ENCODE measurements at regions of chr14 and their contacts with region 1.

Region 1: DNA sequence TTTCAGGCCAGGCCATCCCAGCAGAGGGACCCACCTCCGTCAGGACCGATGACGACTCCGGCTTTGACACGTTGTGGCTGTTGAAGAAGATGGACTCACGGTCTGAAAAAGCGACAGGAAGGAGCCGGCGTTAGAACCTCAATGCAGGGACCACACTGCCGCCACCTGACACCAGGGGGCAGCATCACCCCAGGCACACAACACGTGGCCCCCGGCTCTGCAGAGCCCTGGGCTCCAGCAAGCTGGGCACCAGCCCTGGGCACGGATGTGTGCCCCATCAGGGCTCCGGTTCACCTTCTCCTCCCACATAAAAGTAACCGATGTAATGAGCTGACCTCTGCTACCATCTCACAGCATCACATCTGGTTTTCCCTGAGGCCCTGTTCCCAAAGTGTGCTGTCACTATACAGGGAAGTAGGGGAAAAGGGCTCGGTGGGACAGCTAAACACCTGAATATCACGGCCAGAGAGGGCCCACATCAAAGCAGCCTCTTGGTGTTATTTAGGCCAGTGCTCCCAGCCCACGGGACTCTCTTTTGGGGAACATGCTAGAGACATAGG is 29.0 kb downstream of the CHGA start:
- DNase-seq: peak; percentile 88
- H3K4me3 Mint-ChIP-seq: no peak overlapping the region
- H3K27ac Mint-ChIP-seq: no peak overlapping the region
- H3K4me1 Mint-ChIP-seq: peaks cover 4% of the 10 kb centered on the region
- H3K27me3 Mint-ChIP-seq: no peaks in the 10 kb centered on the region

Region 2: GRCh38 chr14:92926180-92926848 is 25.7 kb before region 1 on chr14:
- CTCF ChIA-PET with region 1: no interaction called
- POLR2A ChIA-PET with region 1: no interaction called
- intact Hi-C with region 1: no loop called
- DNase-seq: no peak
- H3K4me3 Mint-ChIP-seq: no peak overlapping the region
- H3K27ac Mint-ChIP-seq: no peak overlapping the region
- H3K4me1 Mint-ChIP-seq: peaks cover 4% of the 10 kb centered on the region
- H3K27me3 Mint-ChIP-seq: peaks cover 16% of the 10 kb centered on the region

Region 3: GRCh38 chr14:92963301-92964123 is 11.5 kb after region 1 on chr14:
- CTCF ChIA-PET with region 1: interaction called, 15 read pairs
- POLR2A ChIA-PET with region 1: no interaction called
- intact Hi-C with region 1: no loop called
- DNase-seq: no peak
- H3K4me3 Mint-ChIP-seq: no peak overlapping the region
- H3K27ac Mint-ChIP-seq: no peak overlapping the region
- H3K4me1 Mint-ChIP-seq: no peaks in the 10 kb centered on the region
- H3K27me3 Mint-ChIP-seq: no peaks in the 10 kb centered on the region

Region 4: DNA sequence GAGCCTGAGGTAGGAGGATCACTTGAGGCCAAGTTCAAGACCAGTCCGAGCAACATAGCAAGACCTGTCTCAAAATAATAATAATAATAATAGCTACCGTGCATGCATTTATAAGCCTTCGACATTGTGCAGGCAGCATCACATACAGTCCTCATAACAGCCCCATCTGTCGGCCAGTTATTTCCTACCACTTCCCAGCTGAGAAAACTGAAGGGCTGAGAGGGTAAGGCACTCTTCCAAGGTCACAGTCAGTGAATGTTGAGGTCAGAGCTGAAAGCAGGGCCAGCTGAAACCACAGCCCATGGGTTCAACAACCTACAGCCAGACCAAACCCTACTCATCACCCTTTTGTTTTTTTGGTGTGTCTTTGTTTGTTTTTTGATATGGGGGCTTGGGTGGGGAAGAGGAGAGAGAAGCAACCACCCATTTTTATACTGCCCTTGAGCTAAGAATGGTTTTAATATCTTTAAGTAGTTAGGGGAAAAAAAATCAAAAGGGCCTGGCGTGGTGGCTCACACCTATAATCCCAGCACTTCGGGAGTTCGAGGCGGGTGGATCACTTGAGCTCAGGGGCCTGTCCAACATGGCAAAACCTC is 180.6 kb after region 1 on chr14:
- CTCF ChIA-PET with region 1: interaction called, 17 read pairs
- POLR2A ChIA-PET with region 1: no interaction called
- intact Hi-C with region 1: no loop called
- DNase-seq: peak; percentile 21
- H3K4me3 Mint-ChIP-seq: no peak overlapping the region
- H3K27ac Mint-ChIP-seq: no peak overlapping the region
- H3K4me1 Mint-ChIP-seq: no peaks in the 10 kb centered on the region
- H3K27me3 Mint-ChIP-seq: peaks cover 4% of the 10 kb centered on the region

Region 5: DNA sequence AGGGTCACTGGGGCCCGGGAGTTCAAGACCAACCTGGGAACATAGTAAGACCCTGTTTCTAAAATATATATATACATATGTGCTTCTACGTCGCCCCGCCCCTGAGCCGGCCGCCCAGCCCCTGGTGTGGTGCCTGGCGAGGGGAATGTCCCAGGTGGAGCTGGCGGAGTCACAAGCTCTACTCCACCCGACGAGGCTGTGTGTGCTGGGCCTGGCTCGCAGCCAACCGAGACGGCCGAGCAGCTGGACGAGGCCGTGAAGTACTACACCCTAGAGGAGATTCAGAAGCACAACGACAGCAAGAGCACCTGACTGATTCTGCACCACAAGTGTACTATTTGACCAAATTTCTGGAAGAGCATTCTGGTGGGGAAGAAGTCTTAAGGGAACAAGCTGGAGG is 185.9 kb after region 1 on chr14:
- CTCF ChIA-PET with region 1: interaction called, 18 read pairs
- POLR2A ChIA-PET with region 1: interaction called, 3 read pairs
- intact Hi-C with region 1: loop called (anchors 1 kb)
- DNase-seq: no peak
- H3K4me3 Mint-ChIP-seq: no peak overlapping the region
- H3K27ac Mint-ChIP-seq: no peak overlapping the region
- H3K4me1 Mint-ChIP-seq: peaks cover 2% of the 10 kb centered on the region
- H3K27me3 Mint-ChIP-seq: no peaks in the 10 kb centered on the region

Region 6: DNA sequence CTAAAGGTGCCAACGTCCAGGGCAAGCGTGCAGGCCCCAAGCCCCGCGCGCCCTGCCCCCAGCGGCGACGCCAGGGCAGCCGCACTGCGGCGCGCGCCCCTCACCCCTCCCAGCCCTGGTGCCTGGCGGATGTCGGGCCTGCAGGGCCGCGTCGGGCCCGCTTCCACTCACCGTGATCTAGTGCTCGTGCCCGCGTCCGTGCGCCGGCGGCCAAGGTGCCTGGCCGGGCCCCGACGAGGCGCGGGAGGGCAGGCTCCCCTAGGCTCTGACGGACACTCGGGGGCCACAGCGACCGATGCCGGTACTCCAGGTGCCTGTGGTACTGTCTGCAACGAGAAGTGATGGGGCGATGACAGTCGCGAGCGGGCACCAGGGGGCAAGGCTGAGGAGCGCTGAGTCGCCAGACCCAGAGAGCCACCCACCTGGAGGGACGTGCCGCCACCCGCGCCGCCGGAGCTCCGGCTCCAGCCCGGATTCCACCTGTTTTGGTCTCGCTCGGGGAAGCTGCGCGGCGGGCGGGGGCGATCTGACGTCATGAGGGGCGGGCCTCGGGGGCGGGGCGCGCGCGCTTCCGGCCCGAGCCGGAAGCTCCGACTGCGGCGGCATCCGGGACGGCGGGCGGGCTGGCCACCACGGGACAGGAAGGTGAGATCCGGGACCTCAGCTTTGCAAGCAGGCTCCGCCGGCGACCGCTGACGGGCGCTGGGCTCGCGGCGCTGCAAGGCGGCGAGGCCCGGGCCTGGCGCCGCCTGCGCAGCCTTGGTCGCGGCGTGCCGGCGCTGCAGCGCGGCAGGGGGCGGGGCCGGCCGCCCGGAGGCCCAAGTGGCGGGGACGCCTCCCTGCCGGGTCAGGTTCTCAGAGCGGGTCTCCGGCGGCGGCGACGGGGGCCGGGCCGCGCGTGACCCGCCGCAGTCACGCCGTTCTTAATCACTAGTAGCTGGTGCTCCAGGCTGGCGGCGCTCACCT is 232.7 kb after region 1 on chr14 and contains the starts of genes LYSET and MOAP1:
- CTCF ChIA-PET with region 1: interaction called, 16 read pairs
- POLR2A ChIA-PET with region 1: no interaction called
- intact Hi-C with region 1: no loop called
- DNase-seq: peak; percentile 94
- H3K4me3 Mint-ChIP-seq: peak within 1 kb of the TSS; percentile 93
- H3K27ac Mint-ChIP-seq: peak within 1 kb of the TSS; percentile 92
- H3K4me1 Mint-ChIP-seq: peaks cover 47% of the 10 kb centered on the region
- H3K27me3 Mint-ChIP-seq: no peaks in the 10 kb centered on the region
- total RNA-seq, gene LYSET: 12.0 to 12.4 TPM
- total RNA-seq, gene MOAP1: 14.2 to 14.8 TPM

Measured in activated CD4-positive, alpha-beta memory T cell treated with anti-CD3 and anti-CD28 coated beads for 36 hours (primary cell).